ENCODE measurements at regions of chr2 and their contacts with region 1.

Region 1: GRCh38 chr2:151828143-151828889 is at the start of gene ARL5A:
- DNase-seq: peak; percentile 93 to 97 (median 95)
- H3K4me3 ChIP-seq: peak within 1 kb of the TSS; percentile 62 to 88
- H3K4me3 Mint-ChIP-seq: peak within 1 kb of the TSS; percentile 87 to 97 (median 94)
- H3K27ac ChIP-seq: peak within 1 kb of the TSS; percentile 82
- H3K27ac Mint-ChIP-seq: peak within 1 kb of the TSS; percentile 84 to 97 (median 93)
- H3K4me1 ChIP-seq: peaks cover 44% of the 10 kb centered on the region
- H3K4me1 Mint-ChIP-seq: peaks cover 32 to 57% (median 41%) of the 10 kb centered on the region in 4 donors
- H3K27me3 ChIP-seq: no peaks in the 10 kb centered on the region
- H3K27me3 Mint-ChIP-seq: no peaks in the 10 kb centered on the region
- total RNA-seq, gene ARL5A: 40.9 to 41.6 TPM

Region 2: DNA sequence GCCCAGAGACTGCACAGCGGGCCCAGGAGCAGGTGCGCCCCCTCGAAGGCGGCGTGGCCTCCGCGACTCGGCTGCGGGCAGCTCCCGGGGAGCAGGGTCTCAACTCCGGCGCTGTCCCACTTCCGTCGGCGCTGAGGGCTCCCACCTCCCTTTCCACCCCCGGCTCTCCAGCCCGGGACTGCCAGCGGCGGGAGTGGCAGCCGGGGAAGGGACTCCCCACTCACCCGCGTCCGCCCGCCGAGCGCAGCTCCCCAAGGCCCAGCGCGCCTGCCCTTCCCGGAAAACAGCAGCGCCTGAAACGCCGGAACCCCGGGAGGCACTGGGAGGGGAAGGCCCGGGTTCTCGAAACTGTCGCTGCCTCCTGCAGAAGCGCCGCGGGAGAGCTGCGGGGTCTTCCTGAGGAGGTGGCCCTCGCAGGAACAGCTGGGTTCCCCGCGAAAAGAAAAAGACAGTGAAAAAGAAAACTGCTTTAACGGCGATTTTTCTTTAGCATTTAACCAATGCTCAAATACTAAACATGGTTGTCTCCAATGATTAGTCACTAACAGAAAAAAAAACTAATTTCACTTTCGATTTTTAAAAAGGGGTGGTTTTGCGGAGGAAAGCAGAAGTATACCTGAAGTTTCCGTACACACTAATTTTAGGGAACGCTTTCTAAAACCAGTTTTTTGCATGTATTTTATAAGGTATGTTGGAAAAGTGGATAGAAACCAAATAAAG is 538.8 kb before region 1 on chr2 and contains the start of gene NMI:
- CTCF ChIA-PET with region 1: no interaction called
- POLR2A ChIA-PET with region 1: interaction called, 5 read pairs
- intact Hi-C with region 1: loop called (anchors 2 kb)
- DNase-seq: peak; percentile 75 to 84 (median 81)
- H3K4me3 ChIP-seq: peak within 1 kb of the TSS; percentile 70 to 82
- H3K4me3 Mint-ChIP-seq: peak within 1 kb of the TSS; percentile 90 to 98 (median 94)
- H3K27ac ChIP-seq: peak within 1 kb of the TSS; percentile 95
- H3K27ac Mint-ChIP-seq: peak within 1 kb of the TSS; percentile 96 to 99 (median 98)
- H3K4me1 ChIP-seq: peaks cover 45% of the 10 kb centered on the region
- H3K4me1 Mint-ChIP-seq: peaks cover 31 to 62% (median 49%) of the 10 kb centered on the region in 4 donors
- H3K27me3 ChIP-seq: no peaks in the 10 kb centered on the region
- H3K27me3 Mint-ChIP-seq: no peaks in the 10 kb centered on the region
- total RNA-seq, gene NMI: 38.6 to 40.0 TPM

Region 3: DNA sequence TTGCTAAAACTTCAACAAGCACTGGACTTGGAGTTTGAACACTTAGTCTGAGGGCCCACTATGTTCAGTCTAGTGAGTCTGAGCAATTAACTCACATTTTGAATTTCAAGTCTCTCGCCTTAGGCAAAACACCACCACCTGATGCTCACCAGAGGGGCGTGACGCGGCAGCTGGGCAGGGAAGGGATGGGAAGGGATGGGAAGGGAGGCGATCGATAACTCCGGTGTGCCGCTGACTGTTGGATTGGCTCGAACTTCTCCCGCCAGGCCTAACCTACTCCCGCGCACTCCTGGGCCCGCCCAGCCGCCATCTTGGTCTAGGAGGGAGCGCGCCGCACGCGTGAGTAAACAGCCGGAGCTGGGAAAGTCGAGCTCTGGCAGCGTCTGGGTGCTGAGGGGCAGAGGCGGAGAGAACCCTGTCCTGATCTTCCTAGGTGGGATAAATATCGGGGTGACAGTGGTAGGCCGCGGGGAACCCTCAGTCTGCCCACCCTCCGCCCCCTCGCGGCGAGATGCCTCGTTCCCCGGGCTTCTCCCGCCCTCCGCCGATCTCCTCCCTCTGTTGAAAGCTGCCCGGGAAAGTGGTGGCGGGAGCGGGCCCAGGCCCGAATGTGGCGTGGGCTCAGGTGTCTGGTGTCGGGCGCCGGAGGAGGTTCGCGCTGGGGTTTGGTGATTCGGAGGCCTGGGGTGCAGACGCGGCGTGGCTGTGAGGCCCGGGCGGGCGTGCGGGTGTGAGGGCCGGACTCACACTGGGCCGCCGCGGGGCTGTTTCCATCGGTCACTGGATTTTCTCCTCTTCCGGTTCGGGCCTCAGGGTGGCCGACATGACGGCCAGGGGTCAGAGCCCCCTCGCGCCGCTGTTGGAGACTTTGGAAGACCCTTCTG is 418.5 kb before region 1 on chr2 and contains the start of gene RIF1:
- CTCF ChIA-PET with region 1: no interaction called
- POLR2A ChIA-PET with region 1: interaction called, 3 read pairs
- intact Hi-C with region 1: loop called (anchors 2 kb)
- DNase-seq: peak; percentile 68 to 77 (median 74)
- H3K4me3 ChIP-seq: peak within 1 kb of the TSS; percentile 69 to 95
- H3K4me3 Mint-ChIP-seq: peak within 1 kb of the TSS; percentile 91 to 99 (median 96)
- H3K27ac ChIP-seq: peak within 1 kb of the TSS; percentile 85
- H3K27ac Mint-ChIP-seq: peak within 1 kb of the TSS; percentile 86 to 97 (median 94)
- H3K4me1 ChIP-seq: peaks cover 22% of the 10 kb centered on the region
- H3K4me1 Mint-ChIP-seq: peaks cover 18 to 46% (median 31%) of the 10 kb centered on the region in 4 donors
- H3K27me3 ChIP-seq: no peaks in the 10 kb centered on the region
- H3K27me3 Mint-ChIP-seq: no peaks in the 10 kb centered on the region
- total RNA-seq, gene RIF1: 72.3 to 73.3 TPM

Region 4: DNA sequence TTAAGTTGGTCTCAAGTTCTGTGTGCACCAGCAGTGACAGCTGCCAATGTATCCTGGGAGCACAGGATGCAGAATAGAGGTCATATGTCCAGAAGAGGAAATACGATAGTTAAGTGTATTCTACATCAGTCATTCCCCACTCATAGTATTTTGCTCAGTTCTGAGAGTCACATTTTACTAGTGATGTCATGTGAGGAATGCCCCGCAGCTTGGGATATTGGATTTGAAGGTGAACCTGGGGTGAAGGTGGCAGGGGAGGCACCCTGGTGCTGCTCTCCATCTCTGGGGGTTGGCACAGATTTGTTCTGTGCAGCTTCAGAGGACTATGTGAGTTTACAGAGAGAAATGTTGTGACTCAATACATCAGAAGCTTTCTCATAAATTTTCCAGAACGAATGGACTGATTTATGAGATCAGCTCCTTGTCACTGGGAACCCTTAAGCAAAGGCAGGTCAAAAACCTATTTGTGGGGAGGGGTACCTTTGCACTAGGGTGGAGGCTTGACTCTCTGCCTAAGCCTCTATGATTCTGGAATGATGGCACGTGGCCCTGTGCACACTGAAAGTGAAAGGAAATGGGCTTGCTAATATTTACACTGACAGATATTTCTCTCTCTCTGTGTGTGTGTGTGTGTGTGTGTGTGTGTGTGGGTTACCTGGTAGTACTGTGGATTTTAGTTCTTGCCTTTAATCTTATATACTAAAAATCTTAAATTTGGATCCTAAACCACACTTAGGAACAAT is 190.0 kb before region 1 on chr2:
- CTCF ChIA-PET with region 1: interaction called, 5 read pairs
- POLR2A ChIA-PET with region 1: interaction called, 19 read pairs
- intact Hi-C with region 1: loop called (anchors 1 kb)
- DNase-seq: peak; percentile 43 to 59 (median 56)
- H3K4me3 ChIP-seq: peak overlapping the region in 1 of 2 donors; percentile 20
- H3K4me3 Mint-ChIP-seq: peak overlapping the region; percentile 64 to 90 (median 80)
- H3K27ac ChIP-seq: peak overlapping the region; percentile 51
- H3K27ac Mint-ChIP-seq: peak overlapping the region; percentile 72 to 96 (median 88)
- H3K4me1 ChIP-seq: peaks cover 46% of the 10 kb centered on the region
- H3K4me1 Mint-ChIP-seq: peaks cover 33 to 58% (median 39%) of the 10 kb centered on the region in 4 donors
- H3K27me3 ChIP-seq: no peaks in the 10 kb centered on the region
- H3K27me3 Mint-ChIP-seq: no peaks in the 10 kb centered on the region

Region 5: GRCh38 chr2:151808258-151809072 is 19.9 kb before region 1 on chr2:
- CTCF ChIA-PET with region 1: interaction called, 6 read pairs
- POLR2A ChIA-PET with region 1: interaction called, 3 read pairs
- intact Hi-C with region 1: loop called (anchors 1 kb)
- DNase-seq: peak in 4 of 5 donors; percentile 31 to 44 (median 41)
- H3K4me3 ChIP-seq: peak overlapping the region in 1 of 2 donors; percentile 12
- H3K4me3 Mint-ChIP-seq: peak overlapping the region in 4 of 8 donors; percentile 10 to 62 (median 32)
- H3K27ac ChIP-seq: no peak overlapping the region
- H3K27ac Mint-ChIP-seq: peak overlapping the region in 5 of 7 donors; percentile 10 to 59 (median 38)
- H3K4me1 ChIP-seq: peaks cover 14% of the 10 kb centered on the region
- H3K4me1 Mint-ChIP-seq: peaks cover 0 to 7% (median 4%) of the 10 kb centered on the region in 4 donors
- H3K27me3 ChIP-seq: no peaks in the 10 kb centered on the region
- H3K27me3 Mint-ChIP-seq: no peaks in the 10 kb centered on the region

Region 6: GRCh38 chr2:151817929-151818328 is 10.4 kb before region 1 on chr2:
- CTCF ChIA-PET with region 1: interaction called, 10 read pairs
- POLR2A ChIA-PET with region 1: interaction called, 7 read pairs
- intact Hi-C with region 1: no loop called
- DNase-seq: no peak
- H3K4me3 ChIP-seq: no peak overlapping the region
- H3K4me3 Mint-ChIP-seq: no peak overlapping the region
- H3K27ac ChIP-seq: no peak overlapping the region
- H3K27ac Mint-ChIP-seq: no peak overlapping the region
- H3K4me1 ChIP-seq: peaks cover 8% of the 10 kb centered on the region
- H3K4me1 Mint-ChIP-seq: peaks cover 22 to 53% (median 26%) of the 10 kb centered on the region in 4 donors
- H3K27me3 ChIP-seq: no peaks in the 10 kb centered on the region
- H3K27me3 Mint-ChIP-seq: no peaks in the 10 kb centered on the region

Region 7: DNA sequence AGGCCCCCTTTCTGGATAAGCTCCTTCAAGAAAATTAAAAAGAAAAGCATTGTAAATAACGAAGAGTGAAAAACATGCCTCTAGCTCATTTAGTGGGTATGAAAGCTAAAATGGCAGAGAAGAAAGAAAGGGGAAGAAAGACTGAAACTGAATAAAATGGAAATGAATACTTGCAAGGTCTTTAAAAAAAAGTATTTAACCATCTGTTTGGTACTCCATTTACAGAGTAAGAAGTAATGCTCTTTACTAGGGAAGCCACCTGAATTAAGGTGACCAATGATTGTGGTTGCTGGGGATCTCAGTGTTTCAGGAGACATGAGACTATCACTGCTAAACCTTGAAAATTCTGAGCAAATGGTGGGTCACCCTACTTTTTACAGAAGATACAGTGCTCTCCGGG is 17.6 kb after region 1 on chr2:
- CTCF ChIA-PET with region 1: no interaction called
- POLR2A ChIA-PET with region 1: no interaction called
- intact Hi-C with region 1: no loop called
- DNase-seq: no peak
- H3K4me3 ChIP-seq: no peak overlapping the region
- H3K4me3 Mint-ChIP-seq: no peak overlapping the region
- H3K27ac ChIP-seq: no peak overlapping the region
- H3K27ac Mint-ChIP-seq: no peak overlapping the region
- H3K4me1 ChIP-seq: no peaks in the 10 kb centered on the region
- H3K4me1 Mint-ChIP-seq: no peaks in the 10 kb centered on the region
- H3K27me3 ChIP-seq: no peaks in the 10 kb centered on the region
- H3K27me3 Mint-ChIP-seq: peaks cover 0 to 2% of the 10 kb centered on the region in 2 donors

Region 8: GRCh38 chr2:152126664-152127063 is 298.3 kb after region 1 on chr2:
- CTCF ChIA-PET with region 1: no interaction called
- POLR2A ChIA-PET with region 1: no interaction called
- intact Hi-C with region 1: no loop called
- DNase-seq: no peak
- H3K4me3 ChIP-seq: no peak overlapping the region
- H3K4me3 Mint-ChIP-seq: no peak overlapping the region
- H3K27ac ChIP-seq: no peak overlapping the region
- H3K27ac Mint-ChIP-seq: no peak overlapping the region
- H3K4me1 ChIP-seq: no peaks in the 10 kb centered on the region
- H3K4me1 Mint-ChIP-seq: peaks cover 0 to 3% (median under 1%) of the 10 kb centered on the region in 4 donors
- H3K27me3 ChIP-seq: no peaks in the 10 kb centered on the region
- H3K27me3 Mint-ChIP-seq: no peaks in the 10 kb centered on the region

Region 9: DNA sequence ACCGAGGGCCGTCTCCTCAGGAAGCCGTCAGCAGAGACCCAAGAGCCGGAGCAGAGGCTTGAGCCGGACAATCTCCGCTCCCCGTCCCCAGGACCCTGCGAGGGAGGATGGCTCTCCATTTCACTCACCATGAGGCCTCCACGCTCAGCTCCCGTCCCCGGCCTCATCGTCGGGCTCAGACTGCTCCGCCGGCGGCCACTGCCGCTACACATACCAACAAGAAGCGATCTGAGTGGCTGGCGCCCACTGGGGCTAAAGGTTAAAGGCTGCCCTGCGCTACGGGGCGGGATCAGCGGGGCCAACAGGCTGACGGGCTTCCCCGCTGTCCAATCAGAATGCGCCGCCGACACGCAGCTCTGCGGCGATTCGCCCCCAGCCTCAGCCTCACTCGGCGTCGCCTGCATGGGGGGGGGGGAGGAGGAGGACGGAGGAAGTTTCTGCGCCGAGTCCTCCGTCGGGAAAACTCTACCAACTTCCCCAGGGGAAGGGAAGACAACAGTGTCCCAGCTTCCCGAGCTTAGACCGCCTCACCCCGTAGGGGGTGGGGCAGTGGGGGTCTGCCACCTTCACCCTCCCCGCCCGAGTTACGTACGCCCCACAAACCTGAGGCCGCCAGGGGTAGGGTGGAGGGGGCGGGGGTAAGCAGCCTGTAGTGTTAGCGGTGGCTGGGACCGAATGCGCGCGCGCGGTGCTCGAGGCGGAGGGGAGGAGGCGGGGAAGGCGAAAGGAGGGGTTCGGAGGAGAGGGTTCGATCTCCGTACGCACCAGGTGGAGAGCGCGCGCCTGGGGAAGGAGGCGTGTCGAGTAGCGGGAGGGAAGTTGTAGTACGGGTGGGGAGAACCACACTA is 889.1 kb after region 1 on chr2 and contains the start of gene PRPF40A:
- CTCF ChIA-PET with region 1: no interaction called
- POLR2A ChIA-PET with region 1: interaction called, 15 read pairs
- intact Hi-C with region 1: loop called (anchors 1 kb)
- DNase-seq: peak; percentile 98 to 99 (median 99)
- H3K4me3 ChIP-seq: peak within 1 kb of the TSS; percentile 89 to 94
- H3K4me3 Mint-ChIP-seq: peak within 1 kb of the TSS; percentile 97 to 100 (median 99)
- H3K27ac ChIP-seq: peak within 1 kb of the TSS; percentile 96
- H3K27ac Mint-ChIP-seq: peak within 1 kb of the TSS; percentile 95 to 100 (median 98)
- H3K4me1 ChIP-seq: peaks cover 65% of the 10 kb centered on the region
- H3K4me1 Mint-ChIP-seq: peaks cover 39 to 85% (median 58%) of the 10 kb centered on the region in 4 donors
- H3K27me3 ChIP-seq: no peaks in the 10 kb centered on the region
- H3K27me3 Mint-ChIP-seq: peaks cover 0 to 2% of the 10 kb centered on the region in 2 donors
- total RNA-seq, gene PRPF40A: 95.0 to 105 TPM

Measured in CD4-positive, alpha-beta memory T cell (primary cell).